Dendritic cell treated with granulocyte-macrophage colony-stimulating factor and Interleukin-4, amounts not matched to agents 40 ng/mL and 50 ng/mL, for 4 days (primary cell): ENCODE measurements at regions of chr7 and their contacts with region 1.

Region 1: GRCh38 chr7:109101332-109101731 is 531.7 kb downstream of the DNAJB9 start:
- H3K4me3 Mint-ChIP-seq: no peak overlapping the region
- H3K27ac Mint-ChIP-seq: no peak overlapping the region
- H3K4me1 Mint-ChIP-seq: no peaks in the 10 kb centered on the region
- H3K27me3 Mint-ChIP-seq: no peaks in the 10 kb centered on the region

Region 2: GRCh38 chr7:109049366-109049765 is 52.0 kb before region 1 on chr7:
- intact Hi-C with region 1: loop called (anchors 10 kb)
- H3K4me3 Mint-ChIP-seq: no peak overlapping the region
- H3K27ac Mint-ChIP-seq: no peak overlapping the region
- H3K4me1 Mint-ChIP-seq: no peaks in the 10 kb centered on the region
- H3K27me3 Mint-ChIP-seq: no peaks in the 10 kb centered on the region